ENCODE measurements at regions of chr4 and their contacts with region 1.

Region 1: GRCh38 chr4:158259955-158260575 is 49.8 kb downstream of the TMEM144 start:
- DNase-seq: no peak
- H3K4me3 ChIP-seq: no peak overlapping the region
- H3K27ac ChIP-seq: peak overlapping the region; percentile 21
- H3K4me1 ChIP-seq: no peaks in the 10 kb centered on the region
- H3K27me3 ChIP-seq: no peaks in the 10 kb centered on the region
- CTCF ChIP-seq: peak in 2 of 3 experiments; percentile 35 to 55
- POLR2A ChIP-seq: no peak

Region 2: GRCh38 chr4:158624889-158625478 is 364.9 kb after region 1 on chr4:
- intact Hi-C with region 1: loop called (anchors 1 kb)
- DNase-seq: no peak
- H3K4me3 ChIP-seq: no peak overlapping the region
- H3K27ac ChIP-seq: no peak overlapping the region
- H3K4me1 ChIP-seq: no peaks in the 10 kb centered on the region
- H3K27me3 ChIP-seq: no peaks in the 10 kb centered on the region
- CTCF ChIP-seq: peak; percentile 41 to 84 (median 58)
- POLR2A ChIP-seq: no peak